K562 (cell line): ENCODE measurements at regions of chr3 and their contacts with region 1.

Region 1: DNA sequence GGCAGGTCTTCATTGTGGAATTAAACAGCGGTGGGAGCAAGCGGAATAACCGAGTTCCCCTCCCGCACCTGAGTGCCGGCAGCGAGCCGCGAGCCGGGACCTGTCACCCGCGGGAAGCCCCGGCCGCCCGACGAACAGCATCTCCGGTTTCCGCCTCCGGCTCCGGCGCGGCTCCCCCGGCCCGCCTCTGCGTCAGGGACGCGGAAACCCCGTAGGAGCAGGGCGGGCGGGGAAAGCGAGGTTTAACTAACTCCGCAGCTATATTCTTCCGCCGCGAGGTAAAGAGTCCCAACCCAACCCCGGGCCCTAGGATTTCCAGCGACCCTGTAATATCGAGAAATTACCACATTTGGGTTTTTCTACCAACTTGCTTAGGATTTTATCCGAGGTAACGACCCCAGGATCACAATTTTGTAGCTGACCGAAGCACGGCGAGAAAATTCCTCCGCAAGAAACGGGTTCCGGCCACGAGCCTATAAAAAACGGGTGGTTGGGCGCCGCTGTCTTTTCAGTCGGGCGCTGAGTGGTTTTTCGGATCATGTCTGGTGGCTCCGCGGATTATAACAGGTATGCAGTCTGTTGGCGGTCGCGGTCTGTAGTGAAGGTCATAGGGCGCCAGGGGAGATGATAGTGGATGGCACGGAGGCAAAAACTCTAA is at the start of gene EIF4A2:
- DNase-seq: peak; percentile 88 to 94 (median 92)
- ATAC-seq: peak; percentile 81
- H3K4me3 ChIP-seq: peak within 1 kb of the TSS; percentile 81
- H3K27ac ChIP-seq: peak within 1 kb of the TSS; percentile 99
- H3K4me1 ChIP-seq: peaks cover 4 to 16% of the 10 kb centered on the region in 2 experiments; a peak in 4 of 5 replicates
- H3K27me3 ChIP-seq: no peaks in the 10 kb centered on the region
- CTCF ChIP-seq: 0 out of 6 replicates have a peak, but pooled peaks of 1 of the 3 experiments have one; percentile 4
- EP300 ChIP-seq: peak; percentile 13; the same call in 1 of the 2 replicates
- POLR2A ChIP-seq: peak; percentile 100
- RAD21 ChIP-seq: no peak
- polyA plus RNA-seq, gene EIF4A2: 329 to 333 TPM

Region 2: GRCh38 chr3:186570096-186570940 is 212.9 kb before region 1 on chr3 and contains the start of gene DNAJB11:
- CTCF ChIA-PET with region 1: no interaction called
- POLR2A ChIA-PET with region 1: interaction called, 36 read pairs
- in situ Hi-C with region 1: no loop called
- intact Hi-C with region 1: no loop called
- DNase-seq: peak; percentile 93 to 99 (median 97)
- ATAC-seq: peak; percentile 88
- H3K4me3 ChIP-seq: peak within 1 kb of the TSS; percentile 96
- H3K27ac ChIP-seq: peak within 1 kb of the TSS; percentile 95
- H3K4me1 ChIP-seq: peaks cover 3 to 11% of the 10 kb centered on the region in 2 experiments; a peak in 4 of 5 replicates
- H3K27me3 ChIP-seq: no peaks in the 10 kb centered on the region
- CTCF ChIP-seq: no peak
- EP300 ChIP-seq: peak; percentile 37; the same call in 1 of the 2 replicates
- POLR2A ChIP-seq: peak; percentile 98
- RAD21 ChIP-seq: no peak
- polyA plus RNA-seq, gene DNAJB11: 14.8 to 16.7 TPM

Region 3: DNA sequence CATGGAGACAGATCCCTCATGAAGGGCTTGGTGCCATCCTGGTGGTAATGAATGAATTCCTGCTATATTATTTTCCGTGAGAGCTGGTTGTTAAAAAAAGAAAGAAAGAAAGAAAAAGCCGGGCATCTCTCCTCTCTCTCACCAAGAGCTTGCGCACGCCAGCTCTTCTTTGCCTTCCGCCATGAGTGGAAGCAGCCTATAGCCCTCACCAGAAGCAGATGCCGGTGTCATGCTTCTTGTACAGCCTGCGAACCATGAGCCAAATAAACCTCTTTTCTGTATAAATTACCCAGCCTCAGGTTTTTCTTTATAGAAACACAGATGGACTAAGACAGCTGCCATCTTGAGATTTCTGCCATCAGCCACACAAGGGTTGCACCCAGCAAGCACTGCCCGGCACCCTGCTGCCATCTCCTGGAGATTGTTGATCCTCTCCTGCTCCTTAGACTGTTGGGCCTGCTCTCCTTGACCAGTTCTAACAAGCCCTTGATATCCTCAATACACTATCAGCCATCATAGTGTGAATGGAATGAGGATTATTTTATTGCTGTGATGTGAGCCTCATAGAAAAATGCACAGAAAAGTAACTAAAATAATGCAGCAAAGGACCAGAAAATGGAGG is 173.8 kb before region 1 on chr3:
- CTCF ChIA-PET with region 1: no interaction called
- POLR2A ChIA-PET with region 1: interaction called, 41 read pairs
- in situ Hi-C with region 1: no loop called
- intact Hi-C with region 1: no loop called
- DNase-seq: peak in 2 of 4 experiments; percentile 35 to 43
- ATAC-seq: peak; percentile 94
- H3K4me3 ChIP-seq: no peak overlapping the region
- H3K27ac ChIP-seq: no peak overlapping the region
- H3K4me1 ChIP-seq: peaks cover 0 to 9% of the 10 kb centered on the region in 2 experiments; a peak in 2 of 5 replicates
- H3K27me3 ChIP-seq: peaks cover 0 to 18% of the 10 kb centered on the region in 2 experiments; a peak in 4 of 5 replicates
- CTCF ChIP-seq: peak; percentile 51 to 69 (median 59)
- EP300 ChIP-seq: no peak
- POLR2A ChIP-seq: no peak
- RAD21 ChIP-seq: peak; percentile 63 to 89; a peak in 3 of 4 replicates

Region 4: GRCh38 chr3:186722456-186722855 is 60.7 kb before region 1 on chr3:
- CTCF ChIA-PET with region 1: no interaction called
- POLR2A ChIA-PET with region 1: interaction called, 14 read pairs
- in situ Hi-C with region 1: no loop called
- intact Hi-C with region 1: no loop called
- DNase-seq: peak in 2 of 4 experiments; percentile 24
- ATAC-seq: peak; percentile 84
- H3K4me3 ChIP-seq: no peak overlapping the region
- H3K27ac ChIP-seq: no peak overlapping the region
- H3K4me1 ChIP-seq: no peaks in the 10 kb centered on the region; a peak in 1 of 5 replicates
- H3K27me3 ChIP-seq: peaks cover 6 to 15% of the 10 kb centered on the region in 2 experiments; a peak in 4 of 5 replicates
- CTCF ChIP-seq: peak; percentile 28 to 45 (median 31); a peak in 3 of 6 replicates
- EP300 ChIP-seq: no peak
- POLR2A ChIP-seq: no peak
- RAD21 ChIP-seq: peak in 1 of 2 experiments; percentile 54; a peak in 3 of 4 replicates

Region 5: GRCh38 chr3:186798239-186798874 is 15.2 kb after region 1 on chr3:
- CTCF ChIA-PET with region 1: no interaction called
- POLR2A ChIA-PET with region 1: interaction called, 40 read pairs
- in situ Hi-C with region 1: no loop called
- intact Hi-C with region 1: no loop called
- DNase-seq: no peak
- ATAC-seq: no peak
- H3K4me3 ChIP-seq: no peak overlapping the region
- H3K27ac ChIP-seq: no peak overlapping the region
- H3K4me1 ChIP-seq: no peaks in the 10 kb centered on the region
- H3K27me3 ChIP-seq: no peaks in the 10 kb centered on the region
- CTCF ChIP-seq: no peak
- EP300 ChIP-seq: no peak
- POLR2A ChIP-seq: no peak
- RAD21 ChIP-seq: no peak

Region 6: GRCh38 chr3:186826976-186827731 is 44.0 kb after region 1 on chr3:
- CTCF ChIA-PET with region 1: no interaction called
- POLR2A ChIA-PET with region 1: interaction called, 19 read pairs
- in situ Hi-C with region 1: no loop called
- intact Hi-C with region 1: no loop called
- DNase-seq: peak; percentile 92 to 99 (median 99)
- ATAC-seq: peak; percentile 88
- H3K4me3 ChIP-seq: peak overlapping the region; percentile 71
- H3K27ac ChIP-seq: peak overlapping the region; percentile 76
- H3K4me1 ChIP-seq: peaks cover 19 to 37% of the 10 kb centered on the region in 2 experiments; a peak in 4 of 5 replicates
- H3K27me3 ChIP-seq: peaks cover 23 to 24% of the 10 kb centered on the region in 2 experiments; a peak in 4 of 5 replicates
- CTCF ChIP-seq: no peak
- EP300 ChIP-seq: no peak
- POLR2A ChIP-seq: peak; percentile 79
- RAD21 ChIP-seq: no peak